ENCODE measurements at regions of chr11 and their contacts with region 1.

Region 1: DNA sequence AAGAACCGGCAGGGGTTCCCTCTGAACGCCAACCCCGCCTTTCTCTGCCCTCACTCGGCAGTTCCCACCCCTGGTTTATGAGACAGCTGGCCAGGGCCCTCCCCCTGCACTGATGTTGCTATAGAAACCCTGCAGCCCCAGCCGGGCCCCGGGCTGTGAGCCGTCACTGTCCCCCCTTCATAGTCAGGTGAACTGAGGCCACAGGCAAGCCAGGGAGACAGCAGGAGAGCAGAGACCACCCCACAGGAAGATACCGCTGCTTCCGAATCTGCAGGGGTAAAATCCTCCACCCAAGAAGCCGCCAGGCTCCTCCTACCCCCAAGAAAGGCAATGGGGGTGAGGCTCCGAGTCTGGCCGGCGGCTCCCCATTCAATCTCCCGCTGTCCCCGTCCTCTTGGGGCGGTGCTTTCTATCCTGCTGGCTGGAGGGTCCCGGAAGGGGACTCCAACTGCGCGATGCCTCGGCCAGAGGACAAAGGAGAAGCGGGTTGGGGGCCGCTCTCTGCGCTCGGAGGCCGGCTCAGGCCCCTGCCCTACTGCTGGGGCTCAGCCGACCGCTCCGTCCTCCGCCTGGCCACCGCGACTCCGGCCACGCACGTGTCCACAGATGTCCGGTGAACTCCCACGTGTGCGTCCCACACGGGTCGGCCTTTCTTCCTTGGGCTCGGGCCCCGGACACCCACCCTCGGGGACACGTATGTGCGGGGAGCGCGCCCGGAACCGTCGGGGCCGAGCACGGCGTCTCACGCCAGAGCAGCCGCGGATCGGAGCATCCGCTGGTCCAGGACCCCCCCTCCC is 587 bp downstream of the SLC25A22 start:
- DNase-seq: peak; percentile 80
- H3K4me3 ChIP-seq: peak overlapping the region; percentile 57 to 66 (median 64)
- H3K27ac ChIP-seq: peak overlapping the region; percentile 32
- H3K4me1 ChIP-seq: peaks cover 14% of the 10 kb centered on the region
- H3K27me3 ChIP-seq: no peaks in the 10 kb centered on the region
- CTCF ChIP-seq: no peak
- POLR2A ChIP-seq: peak; percentile 78

Region 2: GRCh38 chr11:783581-784015 is 13.9 kb before region 1 on chr11:
- CTCF ChIA-PET with region 1: interaction called, 9 read pairs
- POLR2A ChIA-PET with region 1: interaction called, 3 read pairs
- dilution Hi-C with region 1: no loop called
- intact Hi-C with region 1: loop called (anchors 2 kb)
- DNase-seq: peak; percentile 80
- H3K4me3 ChIP-seq: no peak overlapping the region
- H3K27ac ChIP-seq: no peak overlapping the region
- H3K4me1 ChIP-seq: no peaks in the 10 kb centered on the region
- H3K27me3 ChIP-seq: no peaks in the 10 kb centered on the region
- CTCF ChIP-seq: peak; percentile 82 to 93
- POLR2A ChIP-seq: no peak

Region 3: DNA sequence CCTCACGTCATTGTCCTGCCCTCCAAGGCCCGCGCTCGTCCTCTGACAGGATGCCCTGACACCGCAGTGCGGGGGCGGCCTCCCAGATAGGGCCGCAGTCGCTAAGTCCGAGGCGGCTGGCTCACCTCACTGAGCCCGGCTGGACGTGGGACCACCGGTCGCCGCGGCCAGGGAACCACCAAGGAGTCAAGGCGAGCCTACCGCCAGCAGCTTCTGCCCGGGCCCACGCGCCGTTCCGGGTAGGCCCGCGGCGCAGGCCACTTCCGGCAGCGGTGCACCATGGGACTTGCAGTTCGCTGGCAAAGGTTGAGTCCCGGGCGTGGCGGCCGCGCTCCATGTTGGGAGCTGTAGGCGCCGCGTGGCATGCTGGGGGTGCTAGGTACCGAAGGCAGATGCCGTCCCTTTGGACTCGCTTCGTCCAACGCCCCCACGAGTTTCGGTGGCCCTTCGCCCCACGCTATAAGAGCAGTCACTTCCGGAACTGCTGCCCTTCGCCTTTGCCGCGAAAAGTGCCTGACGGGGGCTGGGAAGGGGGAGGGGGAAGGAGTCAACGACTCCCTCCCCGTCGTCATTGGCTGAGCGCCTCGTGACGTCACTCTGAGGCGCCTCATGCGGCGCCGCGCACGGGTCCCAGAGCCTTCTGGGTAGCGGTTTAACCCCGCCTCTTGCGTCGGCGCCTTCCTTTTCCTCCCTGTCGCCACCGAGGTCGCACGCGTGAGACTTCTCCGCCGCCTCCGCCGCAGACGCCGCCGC is 12.0 kb after region 1 on chr11 and contains the start of gene RPLP2:
- CTCF ChIA-PET with region 1: interaction called, 6 read pairs
- POLR2A ChIA-PET with region 1: interaction called, 3 read pairs
- dilution Hi-C with region 1: no loop called
- intact Hi-C with region 1: loop called (anchors 1 kb)
- DNase-seq: peak; percentile 96
- H3K4me3 ChIP-seq: peak within 1 kb of the TSS; percentile 77 to 90 (median 80)
- H3K27ac ChIP-seq: peak within 1 kb of the TSS; percentile 97
- H3K4me1 ChIP-seq: peaks cover 26% of the 10 kb centered on the region
- H3K27me3 ChIP-seq: no peaks in the 10 kb centered on the region
- CTCF ChIP-seq: no peak
- POLR2A ChIP-seq: peak; percentile 92
- total RNA-seq, gene RPLP2: 1,644 and 1,739 TPM in 2 replicates

Measured in endothelial cell of umbilical vein (primary cell).